ENCODE measurements at regions of chr21 and their contacts with region 1.

Region 1: DNA sequence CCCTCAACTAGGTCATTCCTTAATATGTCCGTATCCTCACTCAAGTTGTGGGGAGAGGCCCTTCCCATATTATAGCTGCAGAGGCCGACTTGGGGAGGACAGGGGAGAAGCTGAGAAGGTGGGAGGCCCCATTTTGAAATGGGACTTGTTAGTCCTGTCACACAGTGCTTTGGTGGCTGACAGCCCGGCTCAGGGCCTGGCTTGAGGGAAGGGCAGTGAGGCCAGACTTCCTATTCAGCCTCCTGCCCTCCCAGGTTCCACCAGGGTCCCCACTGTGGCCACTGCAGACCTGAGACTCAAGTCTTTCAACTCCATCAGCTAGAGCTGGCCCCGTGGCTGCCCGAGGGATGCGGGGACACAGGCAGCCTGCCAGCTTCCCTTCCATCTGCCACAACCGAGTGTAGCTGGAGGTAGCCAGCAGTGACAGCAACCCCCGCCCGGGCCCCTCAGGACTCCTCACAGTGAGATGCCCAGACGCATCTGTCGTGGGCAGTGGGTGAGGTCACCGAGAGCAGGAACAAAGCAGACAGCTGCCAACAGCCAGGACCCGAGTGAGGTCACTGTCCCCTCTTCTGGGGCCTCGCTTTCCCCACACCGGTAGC is 36.9 kb downstream of the SIM2 start:
- DNase-seq: peak in 1 of 2 donors; percentile 75
- H3K4me3 ChIP-seq: no peak overlapping the region
- CTCF ChIP-seq: no peak
- POLR2A ChIP-seq: no peak

Region 2: DNA sequence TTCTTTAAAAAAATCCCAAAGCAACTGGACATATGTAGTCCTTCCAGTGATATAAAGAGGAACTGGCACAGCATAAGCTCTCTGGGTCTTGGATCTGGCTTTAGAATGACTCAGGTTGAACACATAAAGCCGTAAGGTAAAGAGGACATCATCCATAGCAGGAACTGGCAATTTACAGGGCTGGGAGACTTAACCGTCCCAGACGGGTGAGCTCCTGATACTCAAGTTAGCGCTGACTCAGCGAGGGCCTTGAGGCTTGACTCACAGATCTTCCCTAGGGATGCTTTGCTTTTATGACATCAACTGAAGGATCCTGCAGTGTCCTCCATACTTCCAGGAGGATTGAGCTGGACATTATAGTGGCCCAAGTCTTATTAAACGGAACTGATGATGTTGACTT is 1912.9 kb before region 1 on chr21:
- intact Hi-C with region 1: loop called (anchors 5 kb)
- DNase-seq: peak in 1 of 2 donors; percentile 63
- H3K4me3 ChIP-seq: no peak overlapping the region
- CTCF ChIP-seq: no peak
- POLR2A ChIP-seq: no peak

Measured in lower leg skin (tissue), 4 donors.